Dorsolateral prefrontal cortex (tissue), 120 donors: ENCODE measurements at regions of chr9 and their contacts with region 1.

Region 1: GRCh38 chr9:137590462-137591383 is at the start of gene ZMYND19:
- DNase-seq: peak; percentile 55 to 89 (median 79)
- H3K4me3 ChIP-seq: peak within 1 kb of the TSS; percentile 59 to 97 (median 86)
- H3K27ac ChIP-seq: peak within 1 kb of the TSS in 22 of 59 donors; percentile 9 to 72 (median 48)
- H3K27me3 ChIP-seq: no peaks in the 10 kb centered on the region
- CTCF ChIP-seq: peak in 21 of 56 donors; percentile 6 to 37 (median 17)
- total RNA-seq, gene ZMYND19: 13.5 to 30.5 (median 23.8) TPM

Region 2: DNA sequence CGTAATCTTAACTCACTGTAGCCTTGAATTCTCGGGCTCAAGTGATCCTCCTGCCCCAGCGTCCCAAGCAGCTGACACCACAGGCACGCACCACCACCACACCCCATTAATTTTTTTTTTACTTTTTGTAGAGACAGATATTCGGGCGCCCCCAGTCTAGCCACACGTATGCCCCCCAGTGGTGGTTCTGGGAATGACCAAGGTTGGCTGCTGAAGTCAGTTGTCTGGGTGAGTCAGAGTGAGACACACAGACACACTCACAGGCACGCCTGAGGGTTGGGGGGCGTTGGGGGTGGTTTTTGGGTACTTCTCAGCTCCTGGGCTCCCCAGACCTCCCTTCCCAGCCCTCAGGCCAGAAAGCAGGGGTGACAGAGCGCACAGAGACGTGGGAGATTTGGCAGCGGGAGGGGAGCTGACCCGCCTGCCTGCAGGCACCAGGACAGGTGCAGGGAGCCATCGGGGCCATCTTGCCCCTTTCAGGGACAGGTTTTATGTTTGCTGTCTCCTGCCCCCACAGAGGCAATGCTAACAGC is 145.4 kb before region 1 on chr9:
- intact Hi-C with region 1: no loop called
- DNase-seq: peak in 9 of 10 donors; percentile 63 to 83 (median 77)
- H3K4me3 ChIP-seq: no peak overlapping the region
- H3K27ac ChIP-seq: no peak overlapping the region
- H3K27me3 ChIP-seq: peaks cover 0 to 22% (median 0%) of the 10 kb centered on the region in 45 donors
- CTCF ChIP-seq: peak; percentile 50 to 89 (median 78)

Region 3: GRCh38 chr9:137605121-137606004 is 14.6 kb after region 1 on chr9 and contains the start of gene ARRDC1:
- intact Hi-C with region 1: loop called in 1 of 2 experiments (anchors 2 kb)
- DNase-seq: peak; percentile 75 to 93 (median 85)
- H3K4me3 ChIP-seq: peak within 1 kb of the TSS; percentile 55 to 94 (median 76)
- H3K27ac ChIP-seq: peak within 1 kb of the TSS in 49 of 59 donors; percentile 41 to 90 (median 74)
- H3K27me3 ChIP-seq: no peaks in the 10 kb centered on the region
- CTCF ChIP-seq: peak in 2 of 56 donors; percentile 25 to 30
- total RNA-seq, gene ARRDC1: 14.9 to 48.4 (median 31.8) TPM

Region 4: DNA sequence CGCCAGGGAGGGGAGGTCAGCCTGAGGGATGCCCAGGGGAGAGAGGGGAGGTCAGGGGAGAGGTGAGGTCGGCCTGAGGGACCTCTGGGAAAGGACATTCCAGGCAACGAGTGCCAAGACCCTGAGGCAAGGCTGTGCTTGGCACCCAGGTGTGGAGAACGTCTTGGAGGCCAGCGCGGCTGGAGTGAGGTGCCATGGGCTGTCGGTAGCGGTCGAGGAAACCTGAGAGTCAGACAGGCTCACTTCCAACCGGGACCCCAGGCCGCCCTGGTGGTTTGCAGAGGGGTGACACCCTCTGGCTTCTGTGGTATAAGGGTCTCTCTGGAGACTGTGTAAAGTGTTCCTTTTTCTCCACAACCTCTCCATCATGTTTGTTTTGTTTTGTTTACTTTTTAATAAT is 369.8 kb after region 1 on chr9:
- intact Hi-C with region 1: no loop called
- DNase-seq: peak in 2 of 10 donors; percentile 13 to 17
- H3K4me3 ChIP-seq: no peak overlapping the region
- H3K27ac ChIP-seq: no peak overlapping the region
- H3K27me3 ChIP-seq: no peaks in the 10 kb centered on the region
- CTCF ChIP-seq: peak in 2 of 56 donors; percentile 20 to 36